HepG2 (cell line): ENCODE measurements at regions of chr17 and their contacts with region 1.

Region 1: GRCh38 chr17:6651357-6651918 is at the starts of genes C17orf100 and MED31:
- DNase-seq: peak; percentile 95
- ATAC-seq: peak; percentile 92
- H3K4me3 ChIP-seq: peak within 1 kb of the TSS; percentile 77 to 83 (median 79)
- H3K27ac ChIP-seq: peak within 1 kb of the TSS; percentile 99
- H3K4me1 ChIP-seq: peaks cover 49% of the 10 kb centered on the region
- H3K27me3 ChIP-seq: no peaks in the 10 kb centered on the region; a peak in 1 of 5 replicates
- CTCF ChIP-seq: no peak
- EP300 ChIP-seq: no peak
- POLR2A ChIP-seq: peak; percentile 87 to 90
- RAD21 ChIP-seq: no peak
- total RNA-seq, gene C17orf100: 3.6 and 4.1 TPM in 2 replicates
- total RNA-seq, gene MED31: 20.9 and 25.0 TPM in 2 replicates

Region 2: GRCh38 chr17:6473128-6473767 is 178.2 kb before region 1 on chr17:
- CTCF ChIA-PET with region 1: interaction called, 5 read pairs
- POLR2A ChIA-PET with region 1: no interaction called
- in situ Hi-C with region 1: no loop called
- intact Hi-C with region 1: loop called (anchors 2 kb)
- DNase-seq: peak; percentile 50
- ATAC-seq: peak; percentile 88
- H3K4me3 ChIP-seq: no peak overlapping the region
- H3K27ac ChIP-seq: no peak overlapping the region
- H3K4me1 ChIP-seq: no peaks in the 10 kb centered on the region
- H3K27me3 ChIP-seq: no peaks in the 10 kb centered on the region
- CTCF ChIP-seq: peak; percentile 95
- EP300 ChIP-seq: no peak
- POLR2A ChIP-seq: no peak
- RAD21 ChIP-seq: peak; percentile 77

Region 3: GRCh38 chr17:6640536-6641373 is 10.7 kb before region 1 on chr17 and contains the starts of genes KIAA0753 and TXNDC17:
- CTCF ChIA-PET with region 1: no interaction called
- POLR2A ChIA-PET with region 1: interaction called, 8 read pairs
- in situ Hi-C with region 1: no loop called
- intact Hi-C with region 1: loop called (anchors 1 kb)
- DNase-seq: peak; percentile 79
- ATAC-seq: peak; percentile 89
- H3K4me3 ChIP-seq: peak within 1 kb of the TSS; percentile 77 to 85 (median 84)
- H3K27ac ChIP-seq: peak within 1 kb of the TSS; percentile 95
- H3K4me1 ChIP-seq: peaks cover 29% of the 10 kb centered on the region
- H3K27me3 ChIP-seq: no peaks in the 10 kb centered on the region
- CTCF ChIP-seq: no peak
- EP300 ChIP-seq: peak in 1 of 2 experiments; percentile 40; a peak in 1 of 4 replicates
- POLR2A ChIP-seq: peak; percentile 94 to 98
- RAD21 ChIP-seq: no peak
- total RNA-seq, gene KIAA0753: 9.1 and 10.7 TPM in 2 replicates
- total RNA-seq, gene TXNDC17: 266 and 359 TPM in 2 replicates

Region 4: GRCh38 chr17:6729531-6729930 is 78.1 kb after region 1 on chr17:
- CTCF ChIA-PET with region 1: no interaction called
- POLR2A ChIA-PET with region 1: no interaction called
- in situ Hi-C with region 1: no loop called
- intact Hi-C with region 1: no loop called
- DNase-seq: no peak
- ATAC-seq: peak; percentile 28; the same call in 1 of the 3 replicates
- H3K4me3 ChIP-seq: no peak overlapping the region
- H3K27ac ChIP-seq: no peak overlapping the region
- H3K4me1 ChIP-seq: peaks cover 19% of the 10 kb centered on the region
- H3K27me3 ChIP-seq: peaks cover 0 to 1% of the 10 kb centered on the region in 2 experiments; a peak in 2 of 5 replicates
- CTCF ChIP-seq: no peak
- EP300 ChIP-seq: no peak
- POLR2A ChIP-seq: no peak
- RAD21 ChIP-seq: no peak

Region 5: GRCh38 chr17:7014261-7014994 is 363.0 kb after region 1 on chr17:
- CTCF ChIA-PET with region 1: no interaction called
- POLR2A ChIA-PET with region 1: no interaction called
- in situ Hi-C with region 1: no loop called
- intact Hi-C with region 1: loop called (anchors 5 kb)
- DNase-seq: peak; percentile 90
- ATAC-seq: peak; percentile 91
- H3K4me3 ChIP-seq: peak overlapping the region; percentile 83 to 97 (median 84)
- H3K27ac ChIP-seq: peak overlapping the region; percentile 98
- H3K4me1 ChIP-seq: peaks cover 42% of the 10 kb centered on the region
- H3K27me3 ChIP-seq: no peaks in the 10 kb centered on the region; a peak in 2 of 5 replicates
- CTCF ChIP-seq: peak; percentile 81
- EP300 ChIP-seq: 0 out of 4 replicates have a peak, but pooled peaks of 1 of the 2 experiments have one; percentile 9
- POLR2A ChIP-seq: peak; percentile 85 to 92
- RAD21 ChIP-seq: no peak